ENCODE measurements at regions of chr13 and their contacts with region 1.

Region 1: GRCh38 chr13:24220086-24220703 is 59.7 kb downstream of the SPATA13 start:
- DNase-seq: peak; percentile 81
- H3K4me3 ChIP-seq: no peak overlapping the region
- H3K27ac ChIP-seq: no peak overlapping the region
- H3K4me1 ChIP-seq: peaks cover 8% of the 10 kb centered on the region
- H3K27me3 ChIP-seq: no peaks in the 10 kb centered on the region
- CTCF ChIP-seq: peak; percentile 61 to 78 (median 78)
- POLR2A ChIP-seq: no peak

Region 2: DNA sequence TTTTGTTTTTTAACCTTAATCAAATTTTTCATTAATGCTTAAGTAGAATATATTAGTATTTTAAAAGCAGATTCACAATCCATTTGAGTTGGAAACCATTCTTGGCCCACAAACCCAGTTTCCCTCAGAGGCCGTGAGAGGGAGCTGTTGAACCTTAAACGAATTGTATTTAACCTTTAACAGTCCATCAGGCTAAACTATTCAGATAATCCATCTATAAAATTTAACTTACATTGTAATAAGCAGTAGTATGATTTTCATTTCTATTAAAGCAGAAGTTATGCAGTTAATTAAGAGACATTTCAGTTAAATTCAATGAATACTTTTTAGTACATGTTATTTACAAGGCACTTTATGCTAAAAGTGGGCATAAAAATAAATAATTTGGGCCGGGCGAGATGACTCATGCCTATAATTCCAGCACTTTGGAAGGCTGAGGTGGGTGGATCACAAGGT is 199.8 kb before region 1 on chr13:
- intact Hi-C with region 1: loop called (anchors 10 kb)
- DNase-seq: peak; percentile 68
- H3K4me3 ChIP-seq: no peak overlapping the region
- H3K27ac ChIP-seq: no peak overlapping the region
- H3K4me1 ChIP-seq: no peaks in the 10 kb centered on the region
- H3K27me3 ChIP-seq: no peaks in the 10 kb centered on the region
- CTCF ChIP-seq: peak; percentile 43 to 60 (median 58)
- POLR2A ChIP-seq: no peak

Region 3: DNA sequence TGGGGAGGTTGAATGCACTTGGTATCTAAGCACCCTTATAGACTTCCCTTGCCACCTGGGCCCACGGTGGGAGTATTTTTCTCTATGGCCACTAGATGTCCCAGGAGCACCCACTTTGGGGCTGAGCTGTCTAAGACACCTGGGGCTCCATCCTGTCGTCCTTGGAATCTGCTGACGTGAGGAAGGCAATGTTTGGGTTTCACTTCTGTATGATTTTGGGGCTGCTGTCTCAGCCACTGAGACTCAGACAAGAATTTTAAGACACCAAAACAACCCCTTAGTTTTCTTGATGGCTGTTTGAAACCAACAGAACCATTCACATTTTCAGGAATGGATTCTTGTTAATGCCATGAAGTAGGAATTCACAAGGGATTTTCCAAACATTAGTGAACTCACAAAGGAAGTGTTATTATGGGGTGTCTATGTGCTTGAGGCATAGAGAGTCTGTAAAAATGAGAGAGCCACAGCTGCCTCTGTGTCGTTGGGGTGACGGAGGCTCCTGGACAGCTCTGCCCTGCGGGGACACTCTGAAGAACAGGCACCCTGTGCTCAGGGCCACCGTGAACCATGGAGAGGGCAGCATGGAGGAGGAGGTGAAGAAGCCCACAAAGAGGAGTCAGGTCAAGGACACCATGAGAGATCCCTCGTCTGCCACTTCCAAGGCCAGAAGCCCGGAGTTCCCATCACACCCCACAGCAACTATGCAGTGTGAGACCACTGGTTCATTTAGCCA is 166.5 kb before region 1 on chr13:
- intact Hi-C with region 1: loop called (anchors 10 kb)
- DNase-seq: peak; percentile 68
- H3K4me3 ChIP-seq: no peak overlapping the region
- H3K27ac ChIP-seq: peak overlapping the region in 1 of 2 donors; percentile 64
- H3K4me1 ChIP-seq: no peaks in the 10 kb centered on the region
- H3K27me3 ChIP-seq: no peaks in the 10 kb centered on the region
- CTCF ChIP-seq: peak; percentile 40 to 50 (median 45)
- POLR2A ChIP-seq: no peak